ENCODE measurements at regions of chr3 and their contacts with region 1.

Region 1: DNA sequence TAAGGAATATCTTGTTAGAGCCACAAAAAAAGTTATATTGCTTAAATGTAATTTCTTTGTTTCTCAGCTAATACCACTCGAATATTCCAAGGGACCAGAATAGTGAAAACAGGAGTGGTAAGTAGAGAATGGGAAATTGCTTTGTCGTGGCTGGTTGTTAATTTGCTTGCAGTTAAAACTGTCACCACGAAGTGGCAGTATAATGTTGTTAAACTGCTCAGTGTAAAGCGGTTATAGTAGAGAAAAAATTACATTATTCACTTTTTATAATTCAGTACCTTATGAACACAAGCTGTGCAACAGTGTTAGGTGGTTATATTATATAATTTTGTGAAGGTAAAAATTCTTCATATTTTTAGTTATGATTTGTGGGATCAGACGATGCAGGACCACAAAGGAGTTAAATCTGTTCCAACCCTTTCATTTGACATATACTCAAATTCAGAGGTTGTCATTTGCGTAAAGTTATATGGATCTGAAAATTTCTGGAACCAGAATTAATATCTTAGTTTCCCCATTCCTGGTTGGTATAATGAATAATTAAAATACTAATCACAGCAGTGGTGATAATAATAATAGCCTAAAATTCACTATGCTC is 171.8 kb downstream of the FEZF2 start:
- H3K4me3 ChIP-seq: no peak overlapping the region
- H3K27ac ChIP-seq: no peak overlapping the region
- H3K4me1 ChIP-seq: no peaks in the 10 kb centered on the region
- CTCF ChIP-seq: peak; percentile 43

Region 2: DNA sequence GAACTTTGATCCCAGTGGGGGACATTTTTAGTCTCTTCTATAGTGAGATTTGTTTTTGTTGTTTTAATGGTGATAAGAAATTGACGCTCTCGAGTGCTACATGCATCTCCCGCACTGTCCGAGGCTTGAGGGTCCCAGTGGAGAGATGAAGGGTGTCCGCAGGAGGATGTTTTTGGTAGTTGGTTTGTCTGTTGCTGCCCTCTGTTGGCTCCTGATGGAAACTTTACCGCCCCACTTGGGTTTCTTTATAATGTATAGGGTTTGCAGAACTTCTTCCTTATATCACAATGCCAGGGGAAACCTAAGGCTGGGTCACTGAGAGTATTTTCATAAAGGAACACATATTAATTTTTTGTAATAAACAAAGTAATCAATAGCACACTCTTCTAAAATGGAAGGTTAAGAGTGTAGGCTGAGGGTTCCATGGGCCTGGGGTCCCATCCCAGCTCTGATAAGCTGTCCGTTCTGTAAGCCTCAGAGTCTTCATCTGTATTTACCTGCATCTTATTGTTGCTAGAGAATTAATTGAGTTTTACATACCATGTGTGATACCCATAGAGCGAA is 357.1 kb after region 1 on chr3:
- CTCF ChIA-PET with region 1: interaction called, 22 read pairs
- POLR2A ChIA-PET with region 1: no interaction called
- H3K4me3 ChIP-seq: no peak overlapping the region
- H3K27ac ChIP-seq: no peak overlapping the region
- H3K4me1 ChIP-seq: no peaks in the 10 kb centered on the region
- CTCF ChIP-seq: 0 out of 2 replicates have a peak, but pooled peaks have one; percentile 34

Measured in HEK293 (cell line).